Left cardiac atrium (tissue), 4 donors: ENCODE measurements at regions of chr3 and their contacts with region 1.

Region 1: GRCh38 chr3:47824541-47825473 is 21.9 kb downstream of the DHX30 start:
- DNase-seq: peak; percentile 84
- ATAC-seq: peak; percentile 99 to 100

Region 2: GRCh38 chr3:48023377-48023776 is 198.6 kb after region 1 on chr3:
- intact Hi-C with region 1: no loop called
- DNase-seq: no peak
- ATAC-seq: peak in 1 of 2 donors; percentile 41

Region 3: GRCh38 chr3:48151058-48151806 is 326.4 kb after region 1 on chr3:
- intact Hi-C with region 1: loop called in 1 of 2 experiments (anchors 2 kb)
- DNase-seq: peak; percentile 80
- ATAC-seq: peak; percentile 97